Activated naive CD4-positive, alpha-beta T cell treated with anti-CD3 and anti-CD28 coated beads for 36 hours (primary cell): ENCODE measurements at regions of chr3 and their contacts with region 1.

Region 1: GRCh38 chr3:185572183-185572582 is 13.9 kb upstream of the SENP2 start:
- DNase-seq: no peak
- H3K4me3 Mint-ChIP-seq: no peak overlapping the region
- H3K27ac Mint-ChIP-seq: no peak overlapping the region
- H3K4me1 Mint-ChIP-seq: peaks cover 2% of the 10 kb centered on the region
- H3K27me3 Mint-ChIP-seq: no peaks in the 10 kb centered on the region

Region 2: GRCh38 chr3:185460719-185461350 is 111.3 kb before region 1 on chr3:
- CTCF ChIA-PET with region 1: interaction called, 4 read pairs
- intact Hi-C with region 1: loop called (anchors 1 kb)
- DNase-seq: no peak
- H3K4me3 Mint-ChIP-seq: no peak overlapping the region
- H3K27ac Mint-ChIP-seq: no peak overlapping the region
- H3K4me1 Mint-ChIP-seq: no peaks in the 10 kb centered on the region
- H3K27me3 Mint-ChIP-seq: no peaks in the 10 kb centered on the region